Psoas muscle (tissue), 8 donors: ENCODE measurements at regions of chr16 and their contacts with region 1.

Region 1: DNA sequence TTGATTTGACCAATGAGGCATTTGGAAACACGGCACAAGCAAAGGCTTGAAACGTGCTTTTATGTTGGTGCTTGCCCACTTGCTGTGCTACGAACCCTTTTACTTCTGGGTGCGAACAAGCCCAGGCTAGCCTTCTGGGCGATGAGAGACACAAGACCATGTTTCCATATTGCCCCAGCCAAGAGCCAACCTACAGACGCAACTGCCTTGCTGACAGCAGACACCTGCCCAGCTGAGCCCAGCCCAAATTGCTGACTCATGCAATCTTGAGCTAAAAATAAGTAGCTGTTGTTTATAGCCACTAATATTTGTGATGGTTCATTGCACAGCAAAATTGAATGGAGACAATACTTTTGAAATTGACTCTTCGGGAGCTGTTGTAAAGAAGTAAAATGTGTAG is 464.5 kb downstream of the WWOX start:
- DNase-seq: no peak
- ATAC-seq: peak; percentile 45 to 94 (median 84)
- H3K4me3 ChIP-seq: no peak overlapping the region
- H3K27ac ChIP-seq: peak overlapping the region; percentile 61
- H3K4me1 ChIP-seq: peaks cover 5% of the 10 kb centered on the region
- H3K27me3 ChIP-seq: no peaks in the 10 kb centered on the region
- CTCF ChIP-seq: no peak

Region 2: DNA sequence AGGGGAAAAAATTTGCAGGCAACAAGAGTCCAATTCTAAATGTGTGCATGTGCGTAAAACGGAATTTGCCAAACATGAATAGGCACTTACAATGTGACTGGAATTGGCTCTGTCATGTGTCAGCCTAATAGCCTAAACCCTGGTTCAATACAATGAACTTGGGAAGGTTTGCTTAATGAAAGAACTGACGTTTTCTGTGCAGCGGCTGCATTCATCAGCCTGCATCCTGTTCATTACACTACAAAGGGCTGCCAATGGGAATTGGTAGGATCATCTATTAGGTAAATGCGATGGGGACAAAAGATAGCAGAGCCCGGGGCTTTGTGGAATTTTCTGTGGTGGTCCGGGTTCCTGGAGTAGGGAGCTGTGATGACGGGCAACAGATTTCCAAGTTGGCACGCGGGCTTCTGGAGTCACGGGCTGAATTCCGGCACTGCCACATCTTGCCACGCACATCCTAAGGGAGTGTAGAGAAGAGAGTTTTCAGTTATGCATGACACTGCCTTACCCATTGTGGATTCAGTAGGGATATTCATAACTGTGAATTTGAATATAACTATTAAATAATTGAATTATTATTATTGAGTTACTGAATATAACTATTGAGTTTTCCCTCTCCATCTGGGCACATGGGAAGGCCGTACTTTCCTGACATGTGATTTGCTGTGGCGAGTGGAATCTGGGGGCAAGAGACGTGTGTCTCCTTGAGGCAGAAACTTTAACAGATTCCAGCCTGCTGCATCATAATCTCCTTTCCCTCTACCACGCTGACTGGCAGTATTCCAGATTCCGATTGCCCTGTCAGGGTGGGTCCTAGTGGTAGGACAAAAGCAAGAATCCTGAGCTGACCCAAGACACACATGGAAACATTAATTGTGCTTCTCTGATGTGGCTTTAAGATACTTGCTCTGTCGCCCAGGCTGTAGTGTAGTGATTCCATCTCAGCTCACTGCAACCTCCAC is 101.2 kb after region 1 on chr16:
- intact Hi-C with region 1: no loop called
- DNase-seq: no peak
- ATAC-seq: no peak
- H3K4me3 ChIP-seq: no peak overlapping the region
- H3K27ac ChIP-seq: no peak overlapping the region
- H3K4me1 ChIP-seq: peaks cover 4% of the 10 kb centered on the region
- H3K27me3 ChIP-seq: no peaks in the 10 kb centered on the region
- CTCF ChIP-seq: no peak

Region 3: GRCh38 chr16:78770353-78771091 is 206.6 kb after region 1 on chr16:
- intact Hi-C with region 1: loop called in 1 of 2 experiments (anchors 10 kb)
- DNase-seq: peak; percentile 77 to 83
- ATAC-seq: peak; percentile 75 to 89 (median 84)
- H3K4me3 ChIP-seq: no peak overlapping the region
- H3K27ac ChIP-seq: no peak overlapping the region
- H3K4me1 ChIP-seq: peaks cover 19% of the 10 kb centered on the region
- H3K27me3 ChIP-seq: no peaks in the 10 kb centered on the region
- CTCF ChIP-seq: peak; percentile 83